ENCODE measurements at regions of chr17 and their contacts with region 1.

Region 1: DNA sequence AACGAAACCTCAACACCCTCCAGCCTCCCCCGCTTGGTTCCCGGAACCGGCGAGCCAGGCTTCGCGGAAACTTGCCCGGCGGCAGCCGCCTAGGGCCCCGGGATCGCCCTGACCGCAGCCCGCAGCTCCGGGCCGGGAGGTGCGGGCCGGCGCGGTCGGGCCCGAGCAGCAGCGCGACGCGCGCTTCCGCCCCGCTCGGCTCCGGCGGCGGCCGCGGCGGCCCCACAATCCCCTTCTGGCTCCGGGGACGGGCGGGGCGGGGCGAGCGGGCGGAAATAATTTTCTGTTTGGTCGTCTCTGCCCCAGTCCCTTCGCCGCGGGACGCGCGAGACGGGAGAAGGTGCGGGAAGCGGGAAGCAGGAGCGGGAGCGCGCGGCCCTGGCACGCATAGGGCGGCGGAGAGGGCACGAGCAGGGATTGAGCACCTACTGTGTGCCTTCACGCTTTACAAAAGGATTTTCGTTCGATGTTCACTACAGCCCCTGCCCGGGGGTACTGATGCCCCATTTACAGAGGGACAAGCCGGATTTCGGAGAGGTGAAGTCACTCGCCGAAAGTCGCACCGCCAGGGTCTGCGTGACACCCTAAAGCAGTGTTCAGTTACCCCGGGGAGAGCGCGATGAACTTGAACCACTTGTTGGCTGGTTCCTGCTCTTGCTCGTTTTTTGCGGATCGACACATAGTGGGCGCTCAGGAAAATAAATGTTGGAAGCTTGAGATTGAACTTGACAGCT is 2.7 kb upstream of the MLLT6 start:
- DNase-seq: peak; percentile 69 to 81 (median 75)
- ATAC-seq: peak; percentile 60
- H3K4me3 ChIP-seq: peak overlapping the region; percentile 70
- H3K4me3 Mint-ChIP-seq: peak overlapping the region; percentile 93 to 100 (median 97)
- H3K27ac ChIP-seq: peak overlapping the region; percentile 97
- H3K27ac Mint-ChIP-seq: peak overlapping the region; percentile 91 to 100 (median 98)
- H3K4me1 ChIP-seq: peaks cover 17 to 18% of the 10 kb centered on the region in 2 donors
- H3K4me1 Mint-ChIP-seq: peaks cover 26 to 56% (median 33%) of the 10 kb centered on the region in 7 donors
- H3K27me3 ChIP-seq: no peaks in the 10 kb centered on the region
- H3K27me3 Mint-ChIP-seq: no peaks in the 10 kb centered on the region

Region 2: GRCh38 chr17:38729886-38730525 is 27.7 kb after region 1 on chr17 and contains the start of gene CISD3:
- CTCF ChIA-PET with region 1: interaction called, 14 read pairs
- POLR2A ChIA-PET with region 1: interaction called, 317 read pairs
- intact Hi-C with region 1: loop called (anchors 1 kb)
- DNase-seq: peak; percentile 73 to 91 (median 84)
- ATAC-seq: peak; percentile 92
- H3K4me3 ChIP-seq: peak within 1 kb of the TSS; percentile 78
- H3K4me3 Mint-ChIP-seq: peak within 1 kb of the TSS; percentile 87 to 99 (median 95)
- H3K27ac ChIP-seq: peak within 1 kb of the TSS; percentile 81
- H3K27ac Mint-ChIP-seq: peak within 1 kb of the TSS; percentile 89 to 97 (median 93)
- H3K4me1 ChIP-seq: peaks cover 44 to 56% of the 10 kb centered on the region in 2 donors
- H3K4me1 Mint-ChIP-seq: peaks cover 40 to 91% (median 79%) of the 10 kb centered on the region in 7 donors
- H3K27me3 ChIP-seq: no peaks in the 10 kb centered on the region
- H3K27me3 Mint-ChIP-seq: peaks cover 0 to 2% (median 0%) of the 10 kb centered on the region in 5 donors
- total RNA-seq, gene CISD3: 8.0 to 39.6 (median 12.9) TPM

Region 3: GRCh38 chr17:38735161-38735997 is 33.0 kb after region 1 on chr17:
- CTCF ChIA-PET with region 1: interaction called, 5 read pairs
- POLR2A ChIA-PET with region 1: interaction called, 18 read pairs
- intact Hi-C with region 1: loop called (anchors 1 kb)
- DNase-seq: peak; percentile 42 to 80 (median 63)
- ATAC-seq: peak; percentile 55
- H3K4me3 ChIP-seq: no peak overlapping the region
- H3K4me3 Mint-ChIP-seq: no peak overlapping the region
- H3K27ac ChIP-seq: no peak overlapping the region
- H3K27ac Mint-ChIP-seq: peak overlapping the region in 3 of 9 donors; percentile 10 to 38 (median 30)
- H3K4me1 ChIP-seq: peaks cover 15 to 16% of the 10 kb centered on the region in 2 donors
- H3K4me1 Mint-ChIP-seq: peaks cover 23 to 50% (median 45%) of the 10 kb centered on the region in 7 donors
- H3K27me3 ChIP-seq: no peaks in the 10 kb centered on the region
- H3K27me3 Mint-ChIP-seq: peaks cover 0 to 6% (median 0%) of the 10 kb centered on the region in 5 donors

Region 4: DNA sequence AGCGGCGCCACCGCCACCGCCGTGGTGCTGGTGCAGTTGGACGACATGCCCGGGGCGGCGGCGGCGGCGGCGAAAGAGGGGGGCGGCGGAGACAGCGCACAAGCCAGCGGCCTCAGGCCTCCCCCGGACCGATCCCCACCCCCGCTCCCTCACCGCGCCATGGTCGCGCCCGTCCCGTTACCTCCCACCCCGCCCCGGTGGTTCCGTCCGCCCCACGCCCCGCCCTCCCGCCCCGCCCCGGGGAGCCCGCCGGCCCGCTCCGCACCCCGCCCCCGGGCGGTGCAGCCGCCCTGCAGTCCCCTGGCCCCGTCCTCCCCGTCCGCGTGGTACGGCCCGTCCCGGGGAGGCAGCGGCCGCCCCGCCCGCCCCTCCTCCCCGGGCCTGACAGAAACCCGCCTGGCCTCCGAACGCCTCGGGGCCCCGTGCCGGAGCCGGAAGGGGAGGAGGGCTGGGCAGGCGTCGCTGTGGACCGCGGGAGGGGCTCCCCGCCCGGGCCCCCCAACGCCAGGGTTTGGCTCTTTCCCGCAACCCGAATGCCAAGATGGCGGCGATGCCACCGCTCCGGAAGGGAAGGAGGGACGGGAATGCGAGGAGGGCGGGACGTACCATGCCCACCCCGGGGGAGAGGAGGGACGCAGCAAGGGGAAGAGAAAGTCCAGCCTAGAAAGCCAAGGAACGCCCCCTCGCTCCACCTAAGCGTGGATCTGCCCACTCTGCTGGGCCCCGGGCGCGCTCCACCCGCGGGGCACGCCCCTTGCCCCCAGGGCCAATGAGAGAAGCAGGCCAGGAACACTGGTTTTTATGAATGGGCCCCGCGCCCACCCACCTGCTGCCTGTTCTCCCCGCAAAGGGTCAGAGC is 97.3 kb after region 1 on chr17 and contains the start of gene PIP4K2B:
- CTCF ChIA-PET with region 1: no interaction called
- POLR2A ChIA-PET with region 1: interaction called, 3 read pairs
- intact Hi-C with region 1: loop called in 1 of 2 experiments (anchors 1 kb)
- DNase-seq: peak; percentile 70 to 88 (median 78)
- ATAC-seq: peak; percentile 87
- H3K4me3 ChIP-seq: peak within 1 kb of the TSS; percentile 93
- H3K4me3 Mint-ChIP-seq: peak within 1 kb of the TSS; percentile 92 to 100 (median 96)
- H3K27ac ChIP-seq: peak within 1 kb of the TSS; percentile 81
- H3K27ac Mint-ChIP-seq: peak within 1 kb of the TSS; percentile 88 to 96 (median 92)
- H3K4me1 ChIP-seq: peaks cover 15 to 21% of the 10 kb centered on the region in 2 donors
- H3K4me1 Mint-ChIP-seq: peaks cover 31 to 48% (median 42%) of the 10 kb centered on the region in 7 donors
- H3K27me3 ChIP-seq: no peaks in the 10 kb centered on the region
- H3K27me3 Mint-ChIP-seq: no peaks in the 10 kb centered on the region
- total RNA-seq, gene PIP4K2B: 32.4 to 67.9 (median 49.1) TPM